ENCODE measurements at regions of chr6 and their contacts with region 1.

Region 1: DNA sequence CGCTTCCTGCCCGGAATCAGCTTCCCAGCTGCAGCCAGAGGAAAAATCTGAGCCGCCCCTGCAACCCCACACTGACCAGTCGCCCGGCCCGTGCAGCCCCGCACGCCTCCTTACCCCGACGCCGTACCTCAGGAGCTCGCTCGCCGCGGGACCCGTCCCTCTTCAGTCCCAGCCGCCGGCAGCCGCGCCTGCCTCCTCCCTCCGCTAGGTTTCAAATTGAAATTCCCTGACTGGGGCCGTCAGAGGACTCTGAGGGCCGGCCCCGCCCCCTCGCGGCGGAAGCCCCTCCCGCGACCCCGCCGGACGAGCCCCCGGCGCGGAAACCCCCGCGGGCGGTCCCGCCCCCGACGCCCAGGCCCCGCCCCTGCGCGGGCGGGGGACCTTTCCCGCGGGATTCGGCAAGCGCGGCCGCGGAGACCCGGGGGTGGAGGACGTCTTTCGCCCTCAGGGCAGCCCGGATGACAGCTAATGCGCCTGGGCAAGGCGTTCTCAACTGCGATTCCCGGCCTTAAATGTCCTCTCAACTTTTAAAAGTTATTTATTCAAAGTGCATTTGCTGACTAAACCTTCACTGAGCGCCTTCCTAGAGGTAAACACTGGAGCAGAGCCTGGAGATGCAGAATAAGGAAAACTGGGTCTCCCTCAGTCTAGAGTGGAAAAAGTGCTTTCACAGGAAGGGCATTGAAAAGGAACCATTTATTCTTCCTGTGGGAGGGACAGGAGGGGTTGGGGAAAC is at the start of gene EPB41L2:
- DNase-seq: peak; percentile 85
- H3K4me3 Mint-ChIP-seq: peak within 1 kb of the TSS; percentile 80
- H3K27ac Mint-ChIP-seq: no peak within 1 kb of the TSS
- H3K4me1 Mint-ChIP-seq: peaks cover 27% of the 10 kb centered on the region
- H3K27me3 Mint-ChIP-seq: no peaks in the 10 kb centered on the region
- total RNA-seq, gene EPB41L2: 30.4 to 37.8 TPM

Region 2: DNA sequence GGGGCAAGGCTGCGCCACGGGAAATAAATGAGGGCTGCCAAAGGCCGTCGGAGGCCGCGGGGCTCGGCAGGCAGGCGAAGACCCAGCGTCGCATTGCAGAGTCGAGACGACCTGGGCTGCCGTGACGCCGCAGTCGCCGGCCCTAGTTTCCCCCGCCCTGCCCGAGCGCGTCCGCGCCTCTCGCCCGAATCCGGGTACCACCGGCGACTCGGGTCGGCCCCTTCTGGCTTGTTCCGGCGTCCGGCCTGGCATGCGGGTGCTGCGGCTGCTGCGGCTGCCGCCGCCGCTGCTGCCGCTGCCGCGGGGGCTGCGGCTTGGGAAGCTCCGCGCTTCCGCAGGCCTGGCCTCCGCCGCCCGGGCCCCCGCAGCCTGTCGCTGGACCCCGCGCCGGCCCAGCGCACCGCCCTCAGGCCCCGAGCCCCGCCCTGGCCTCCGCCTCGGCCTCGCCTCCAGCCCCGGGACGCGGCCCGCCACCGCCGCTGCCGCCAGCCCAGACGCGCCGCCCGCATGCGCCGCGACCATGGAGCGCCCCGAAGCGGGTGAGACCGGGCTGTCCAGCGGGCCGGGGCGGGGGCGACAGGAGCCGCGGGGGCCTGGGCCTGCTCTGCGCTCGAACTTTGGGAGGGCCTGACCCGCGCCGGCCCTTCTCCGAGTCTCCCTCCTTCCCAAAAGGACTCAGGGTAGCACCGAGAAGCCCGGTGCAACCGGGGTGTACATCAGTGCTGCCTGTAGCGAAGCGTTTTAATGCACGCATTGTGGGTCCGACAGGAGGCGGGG is 72.2 kb after region 1 on chr6 and contains the start of gene AKAP7:
- CTCF ChIA-PET with region 1: no interaction called
- POLR2A ChIA-PET with region 1: no interaction called
- intact Hi-C with region 1: loop called (anchors 1 kb)
- DNase-seq: peak; percentile 72
- H3K4me3 Mint-ChIP-seq: peak within 1 kb of the TSS; percentile 79
- H3K27ac Mint-ChIP-seq: peak within 1 kb of the TSS; percentile 83
- H3K4me1 Mint-ChIP-seq: peaks cover 14% of the 10 kb centered on the region
- H3K27me3 Mint-ChIP-seq: peaks cover 2% of the 10 kb centered on the region
- total RNA-seq, gene AKAP7: 4.0 to 4.3 TPM

Measured in activated CD4-positive, alpha-beta memory T cell treated with anti-CD3 and anti-CD28 coated beads for 36 hours (primary cell).